ENCODE measurements at regions of chr17 and their contacts with region 1.

Region 1: GRCh38 chr17:7141824-7142223 is 27.2 kb upstream of the ASGR2 start:
- DNase-seq: peak; percentile 58 to 78
- H3K4me3 ChIP-seq: 0 out of 2 replicates have a peak overlapping the region, but pooled peaks have one; percentile 21
- H3K27ac ChIP-seq: peak overlapping the region; percentile 5; the same call in 1 of the 2 replicates
- H3K4me1 ChIP-seq: peaks cover 32% of the 10 kb centered on the region
- H3K27me3 ChIP-seq: no peaks in the 10 kb centered on the region
- CTCF ChIP-seq: no peak

Region 2: DNA sequence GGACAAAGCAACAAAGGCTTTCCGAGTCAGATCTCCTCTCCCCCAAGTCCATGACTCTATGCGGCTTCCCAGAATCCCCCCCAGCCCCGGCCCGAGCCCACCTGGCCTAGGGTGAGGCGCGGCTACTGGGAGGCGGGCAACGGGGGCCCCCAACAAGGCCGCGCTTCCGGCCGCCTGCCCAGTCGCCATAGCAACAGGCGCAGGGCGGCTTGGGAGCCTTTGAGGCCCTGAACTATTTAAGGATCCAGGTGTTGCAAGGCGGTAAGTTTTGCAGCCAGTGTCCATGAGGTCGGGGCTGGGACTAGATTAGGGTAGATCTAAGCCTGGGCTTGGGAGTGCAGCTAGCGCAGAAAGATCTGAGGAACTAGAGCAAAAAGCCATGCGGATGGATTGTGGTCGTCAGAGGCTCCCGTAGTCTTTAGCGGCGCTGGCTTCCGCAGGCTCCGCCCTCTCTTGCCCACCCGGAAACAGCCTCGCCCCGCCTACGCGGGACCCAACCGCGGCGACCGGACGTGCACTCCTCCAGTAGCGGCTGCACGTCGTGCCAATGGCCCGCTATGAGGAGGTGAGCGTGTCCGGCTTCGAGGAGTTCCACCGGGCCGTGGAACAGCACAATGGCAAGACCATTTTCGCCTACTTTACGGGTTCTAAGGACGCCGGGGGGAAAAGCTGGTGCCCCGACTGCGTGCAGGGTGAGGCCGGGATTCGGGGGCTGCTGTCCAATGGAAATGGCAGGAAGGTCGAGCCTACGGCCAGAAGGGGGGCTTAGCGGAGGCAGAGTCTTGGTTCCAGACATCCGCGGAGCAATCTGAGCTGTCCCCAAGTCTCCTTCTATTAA is 501.1 kb before region 1 on chr17 and contains the starts of genes KIAA0753 and TXNDC17:
- CTCF ChIA-PET with region 1: interaction called, 12 read pairs
- POLR2A ChIA-PET with region 1: no interaction called
- intact Hi-C with region 1: no loop called
- DNase-seq: peak; percentile 74 to 94
- H3K4me3 ChIP-seq: peak within 1 kb of the TSS; percentile 81
- H3K27ac ChIP-seq: peak within 1 kb of the TSS; percentile 71
- H3K4me1 ChIP-seq: peaks cover 31% of the 10 kb centered on the region
- H3K27me3 ChIP-seq: no peaks in the 10 kb centered on the region
- CTCF ChIP-seq: no peak
- total RNA-seq, gene KIAA0753: 34.1 and 47.0 TPM in 2 replicates
- total RNA-seq, gene TXNDC17: 103 and 114 TPM in 2 replicates

Region 3: DNA sequence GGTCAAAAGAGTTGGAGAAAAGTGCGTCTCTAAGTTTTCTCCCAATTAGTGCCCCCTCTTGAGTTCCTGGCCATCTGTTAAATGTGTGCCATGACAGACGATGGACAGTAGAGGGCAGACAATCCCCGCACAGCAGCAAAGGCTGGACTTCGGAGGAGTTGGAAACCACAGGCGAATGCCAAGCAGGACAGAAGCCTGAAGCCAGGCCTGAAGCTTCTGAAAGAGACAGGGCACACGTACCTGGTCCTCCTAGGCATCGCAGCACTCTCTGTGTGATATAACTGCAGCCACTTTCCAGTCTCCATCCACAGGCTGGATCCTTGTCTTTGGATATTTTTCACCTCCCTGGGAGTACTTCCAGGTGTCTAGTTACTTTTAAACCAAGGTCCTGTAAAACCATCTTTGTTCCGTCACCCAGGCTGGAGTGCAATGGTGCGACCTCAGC is 475.7 kb before region 1 on chr17:
- CTCF ChIA-PET with region 1: interaction called, 18 read pairs
- POLR2A ChIA-PET with region 1: no interaction called
- intact Hi-C with region 1: no loop called
- DNase-seq: peak; percentile 67 to 84
- H3K4me3 ChIP-seq: no peak overlapping the region
- H3K27ac ChIP-seq: no peak overlapping the region
- H3K4me1 ChIP-seq: peaks cover 37% of the 10 kb centered on the region
- H3K27me3 ChIP-seq: no peaks in the 10 kb centered on the region
- CTCF ChIP-seq: peak; percentile 96

Region 4: GRCh38 chr17:6729531-6729930 is 412.3 kb before region 1 on chr17:
- CTCF ChIA-PET with region 1: interaction called, 19 read pairs
- POLR2A ChIA-PET with region 1: no interaction called
- intact Hi-C with region 1: no loop called
- DNase-seq: no peak
- H3K4me3 ChIP-seq: no peak overlapping the region
- H3K27ac ChIP-seq: no peak overlapping the region
- H3K4me1 ChIP-seq: no peaks in the 10 kb centered on the region
- H3K27me3 ChIP-seq: no peaks in the 10 kb centered on the region
- CTCF ChIP-seq: no peak

Region 5: GRCh38 chr17:6868579-6868978 is 273.2 kb before region 1 on chr17:
- CTCF ChIA-PET with region 1: interaction called, 13 read pairs
- POLR2A ChIA-PET with region 1: no interaction called
- intact Hi-C with region 1: no loop called
- DNase-seq: peak; percentile 29 to 92
- H3K4me3 ChIP-seq: peak overlapping the region; percentile 25; the same call in 1 of the 2 replicates
- H3K27ac ChIP-seq: peak overlapping the region; percentile 86
- H3K4me1 ChIP-seq: peaks cover 43% of the 10 kb centered on the region
- H3K27me3 ChIP-seq: no peaks in the 10 kb centered on the region
- CTCF ChIP-seq: no peak

Region 6: GRCh38 chr17:7111784-7112509 is 29.9 kb before region 1 on chr17:
- CTCF ChIA-PET with region 1: interaction called, 14 read pairs
- POLR2A ChIA-PET with region 1: no interaction called
- intact Hi-C with region 1: no loop called
- DNase-seq: no peak
- H3K4me3 ChIP-seq: no peak overlapping the region
- H3K27ac ChIP-seq: no peak overlapping the region
- H3K4me1 ChIP-seq: no peaks in the 10 kb centered on the region
- H3K27me3 ChIP-seq: no peaks in the 10 kb centered on the region
- CTCF ChIP-seq: no peak

Region 7: GRCh38 chr17:7167832-7168231 is 26.0 kb after region 1 on chr17:
- CTCF ChIA-PET with region 1: interaction called, 11 read pairs
- POLR2A ChIA-PET with region 1: no interaction called
- intact Hi-C with region 1: loop called (anchors 1 kb)
- DNase-seq: no peak
- H3K4me3 ChIP-seq: no peak overlapping the region
- H3K27ac ChIP-seq: no peak overlapping the region
- H3K4me1 ChIP-seq: peaks cover 4% of the 10 kb centered on the region; the same call in 1 of the 2 replicates
- H3K27me3 ChIP-seq: no peaks in the 10 kb centered on the region
- CTCF ChIP-seq: no peak

Measured in PC-9 (cell line).